Activated naive CD4-positive, alpha-beta T cell treated with anti-CD3 and anti-CD28 coated beads for 36 hours (primary cell): ENCODE measurements at regions of chr15 and their contacts with region 1.

Region 1: DNA sequence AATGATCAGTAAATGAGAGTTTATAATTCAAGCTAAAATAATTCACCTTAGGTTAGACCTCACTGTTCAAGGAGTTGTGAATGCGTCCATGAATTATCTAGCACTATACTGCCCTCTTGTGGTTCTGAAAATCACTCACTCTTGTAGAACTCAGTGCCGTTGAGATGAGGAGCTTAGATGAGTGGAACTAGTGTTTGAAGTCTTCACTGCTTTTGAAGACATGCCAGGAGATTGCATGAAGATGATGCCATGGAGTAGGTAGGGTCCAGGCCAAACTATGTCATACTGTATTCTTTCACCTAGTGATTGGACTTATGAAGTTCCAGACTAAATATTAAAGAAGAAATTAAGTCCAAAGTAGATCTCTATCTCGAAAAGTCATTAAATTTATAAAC is 28.8 kb downstream of the LYSMD4 start:
- DNase-seq: peak; percentile 48
- H3K4me3 Mint-ChIP-seq: no peak overlapping the region
- H3K27ac Mint-ChIP-seq: no peak overlapping the region
- H3K4me1 Mint-ChIP-seq: peaks cover 50% of the 10 kb centered on the region
- H3K27me3 Mint-ChIP-seq: no peaks in the 10 kb centered on the region

Region 2: GRCh38 chr15:99104788-99105513 is 599.5 kb before region 1 on chr15 and contains the start of gene SYNM:
- CTCF ChIA-PET with region 1: interaction called, 4 read pairs
- intact Hi-C with region 1: loop called (anchors 2 kb)
- DNase-seq: peak; percentile 45
- H3K4me3 Mint-ChIP-seq: peak within 1 kb of the TSS; percentile 68
- H3K27ac Mint-ChIP-seq: no peak within 1 kb of the TSS
- H3K4me1 Mint-ChIP-seq: peaks cover 7% of the 10 kb centered on the region
- H3K27me3 Mint-ChIP-seq: peaks cover 45% of the 10 kb centered on the region
- total RNA-seq, gene SYNM: 1.3 to 1.4 TPM

Region 3: GRCh38 chr15:99282121-99282520 is 422.3 kb before region 1 on chr15:
- CTCF ChIA-PET with region 1: interaction called, 20 read pairs
- intact Hi-C with region 1: loop called (anchors 1 kb)
- DNase-seq: no peak
- H3K4me3 Mint-ChIP-seq: no peak overlapping the region
- H3K27ac Mint-ChIP-seq: no peak overlapping the region
- H3K4me1 Mint-ChIP-seq: peaks cover 43% of the 10 kb centered on the region
- H3K27me3 Mint-ChIP-seq: no peaks in the 10 kb centered on the region

Region 4: GRCh38 chr15:99371180-99372103 is 333.0 kb before region 1 on chr15:
- CTCF ChIA-PET with region 1: interaction called, 10 read pairs
- intact Hi-C with region 1: loop called (anchors 1 kb)
- DNase-seq: no peak
- H3K4me3 Mint-ChIP-seq: no peak overlapping the region
- H3K27ac Mint-ChIP-seq: peak overlapping the region; percentile 44
- H3K4me1 Mint-ChIP-seq: peaks cover 22% of the 10 kb centered on the region
- H3K27me3 Mint-ChIP-seq: no peaks in the 10 kb centered on the region

Region 5: DNA sequence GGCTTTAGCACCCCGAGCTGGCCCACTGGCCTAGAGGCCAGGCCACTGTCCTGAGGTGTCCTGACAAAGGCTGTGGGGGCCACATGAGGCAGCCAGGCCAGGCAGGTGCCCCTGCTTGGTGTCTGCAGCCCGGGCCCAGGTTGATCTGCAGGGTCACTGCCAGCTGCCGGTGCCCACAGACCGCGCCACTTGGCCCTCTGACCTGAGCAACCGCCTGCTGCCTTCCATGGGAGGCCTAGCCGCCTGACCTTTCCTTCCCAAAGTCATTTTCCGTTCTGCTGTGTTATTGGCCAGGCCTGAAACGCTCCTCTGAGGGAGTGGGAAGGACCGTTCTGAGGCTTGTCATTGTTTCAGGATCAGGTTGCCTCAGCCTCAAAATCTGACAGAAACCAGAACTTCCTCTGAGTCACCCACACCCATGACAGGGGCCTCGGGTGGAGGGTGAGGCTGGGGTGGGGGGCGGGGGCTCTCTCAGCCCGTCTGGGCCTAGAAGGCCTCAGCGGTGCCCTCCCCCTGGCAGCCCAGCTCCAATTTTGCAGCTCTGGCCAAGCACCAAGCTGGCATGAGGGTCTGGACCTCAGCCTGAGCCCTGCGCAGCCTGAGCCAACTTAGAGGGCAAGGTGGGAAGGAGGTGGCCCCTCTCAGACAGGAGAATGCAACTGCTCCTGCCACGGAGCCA is 279.3 kb before region 1 on chr15:
- CTCF ChIA-PET with region 1: interaction called, 4 read pairs
- intact Hi-C with region 1: loop called (anchors 5 kb)
- DNase-seq: peak; percentile 83
- H3K4me3 Mint-ChIP-seq: no peak overlapping the region
- H3K27ac Mint-ChIP-seq: peak overlapping the region; percentile 53
- H3K4me1 Mint-ChIP-seq: peaks cover 55% of the 10 kb centered on the region
- H3K27me3 Mint-ChIP-seq: no peaks in the 10 kb centered on the region

Region 6: GRCh38 chr15:99692825-99693224 is 11.6 kb before region 1 on chr15:
- CTCF ChIA-PET with region 1: interaction called, 19 read pairs
- intact Hi-C with region 1: no loop called
- DNase-seq: no peak
- H3K4me3 Mint-ChIP-seq: no peak overlapping the region
- H3K27ac Mint-ChIP-seq: no peak overlapping the region
- H3K4me1 Mint-ChIP-seq: no peaks in the 10 kb centered on the region
- H3K27me3 Mint-ChIP-seq: no peaks in the 10 kb centered on the region

Region 7: DNA sequence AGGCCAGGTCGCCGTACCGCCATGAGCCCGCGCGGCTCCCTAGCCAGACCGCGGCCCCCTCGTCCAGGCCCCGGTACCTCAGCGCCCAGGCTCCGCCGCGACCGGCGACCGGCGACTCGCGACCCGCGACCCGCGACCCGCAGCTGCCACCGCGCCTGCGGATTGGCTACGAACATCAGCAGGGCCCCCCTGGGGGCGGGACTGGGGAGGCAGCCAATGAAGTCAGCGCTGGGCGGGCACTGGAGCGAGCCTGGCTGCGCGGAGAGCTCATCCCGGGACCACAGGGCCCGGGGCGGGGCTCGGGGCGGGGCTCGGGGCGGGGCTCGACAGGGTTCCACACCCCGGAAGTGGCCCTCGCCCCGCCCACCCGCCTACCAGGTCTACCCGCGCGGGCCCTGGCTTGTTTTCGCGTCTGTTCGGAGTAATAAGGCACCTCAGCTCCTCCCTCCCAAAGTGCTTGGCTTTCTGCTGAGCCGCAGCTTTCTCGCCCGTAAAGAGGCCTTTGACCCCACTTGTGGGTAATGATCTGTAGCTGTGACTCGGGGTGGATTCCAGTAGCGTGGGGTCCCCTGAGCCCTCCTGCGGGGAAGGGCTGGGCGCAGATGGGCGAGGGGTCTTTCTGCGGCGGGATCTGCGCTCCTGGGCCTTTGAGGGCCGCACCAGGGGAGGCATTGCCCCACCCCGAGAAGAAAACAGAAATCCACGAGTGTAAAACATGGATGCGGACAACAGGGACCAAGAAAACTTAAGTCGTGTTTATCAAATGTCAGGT is 29.0 kb after region 1 on chr15 and contains the start of gene LYSMD4:
- CTCF ChIA-PET with region 1: interaction called, 16 read pairs
- intact Hi-C with region 1: loop called (anchors 1 kb)
- DNase-seq: peak; percentile 99
- H3K4me3 Mint-ChIP-seq: peak within 1 kb of the TSS; percentile 81
- H3K27ac Mint-ChIP-seq: peak within 1 kb of the TSS; percentile 86
- H3K4me1 Mint-ChIP-seq: peaks cover 22% of the 10 kb centered on the region
- H3K27me3 Mint-ChIP-seq: no peaks in the 10 kb centered on the region
- total RNA-seq, gene LYSMD4: 4.9 TPM